ENCODE measurements at regions of chr14 and their contacts with region 1.

Region 1: DNA sequence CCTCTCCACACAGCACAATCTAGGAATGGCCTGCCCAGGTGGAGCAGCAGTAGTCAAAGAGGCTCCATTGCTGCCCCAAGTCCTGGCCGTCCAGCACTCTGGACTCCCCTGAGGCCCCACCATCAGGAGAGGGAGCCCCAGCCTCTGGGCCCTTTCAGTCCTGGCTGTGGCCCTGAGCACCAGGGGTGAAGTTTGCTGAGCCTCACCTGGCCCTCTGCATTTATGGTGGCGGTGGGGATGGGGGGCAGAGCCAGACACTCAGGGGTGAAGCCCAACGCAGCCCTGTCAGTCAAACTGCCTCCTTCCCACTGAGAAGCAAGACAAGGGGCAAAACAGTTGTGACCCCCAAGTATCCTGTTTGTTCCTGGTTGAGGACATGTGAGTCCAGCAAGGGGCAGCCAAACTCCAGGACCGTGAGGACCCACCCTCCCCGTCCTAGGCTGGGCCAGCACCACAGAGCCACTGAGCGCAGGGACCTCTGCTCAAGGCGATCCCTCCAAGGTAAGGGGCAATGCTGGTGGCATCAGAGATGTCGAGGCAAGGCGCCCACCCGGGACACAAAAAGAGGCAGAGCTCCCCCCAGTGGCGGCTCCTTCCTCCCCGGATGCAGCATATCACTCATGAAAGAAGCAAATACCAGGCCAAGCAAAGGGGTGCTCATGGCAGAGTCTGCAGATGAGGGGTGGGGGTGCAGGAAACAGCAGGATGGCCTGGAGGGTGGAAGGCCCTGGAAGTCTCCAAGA is 4.8 kb upstream of the AMN start:
- DNase-seq: no peak
- ATAC-seq: peak; percentile 68
- H3K4me3 ChIP-seq: no peak overlapping the region
- H3K27ac ChIP-seq: peak overlapping the region; percentile 17
- H3K4me1 ChIP-seq: peaks cover 22% of the 10 kb centered on the region
- H3K27me3 ChIP-seq: no peaks in the 10 kb centered on the region; a peak in 2 of 4 replicates
- CTCF ChIP-seq: peak; percentile 73 to 82 (median 75)
- EP300 ChIP-seq: no peak
- POLR2A ChIP-seq: peak; percentile 45
- RAD21 ChIP-seq: peak; percentile 84

Region 2: GRCh38 chr14:102524466-102525218 is 393.0 kb before region 1 on chr14:
- CTCF ChIA-PET with region 1: interaction called, 4 read pairs
- POLR2A ChIA-PET with region 1: no interaction called
- RAD21 ChIA-PET with region 1: no interaction called
- SMC1A ChIA-PET with region 1: no interaction called
- in situ Hi-C with region 1: no loop called
- intact Hi-C with region 1: loop called (anchors 10 kb)
- DNase-seq: peak; percentile 96
- ATAC-seq: peak; percentile 99
- H3K4me3 ChIP-seq: peak overlapping the region; percentile 84
- H3K27ac ChIP-seq: peak overlapping the region; percentile 43
- H3K4me1 ChIP-seq: no peaks in the 10 kb centered on the region; the same call in 1 of the 2 replicates
- H3K27me3 ChIP-seq: no peaks in the 10 kb centered on the region
- CTCF ChIP-seq: peak; percentile 96 to 97 (median 97)
- EP300 ChIP-seq: no peak
- POLR2A ChIP-seq: peak; percentile 83
- RAD21 ChIP-seq: peak; percentile 81

Region 3: GRCh38 chr14:102659797-102660196 is 257.8 kb before region 1 on chr14:
- CTCF ChIA-PET with region 1: no interaction called
- POLR2A ChIA-PET with region 1: no interaction called
- RAD21 ChIA-PET with region 1: no interaction called
- SMC1A ChIA-PET with region 1: no interaction called
- in situ Hi-C with region 1: no loop called
- intact Hi-C with region 1: no loop called
- DNase-seq: no peak
- ATAC-seq: no peak
- H3K4me3 ChIP-seq: no peak overlapping the region
- H3K27ac ChIP-seq: no peak overlapping the region
- H3K4me1 ChIP-seq: no peaks in the 10 kb centered on the region
- H3K27me3 ChIP-seq: no peaks in the 10 kb centered on the region
- CTCF ChIP-seq: no peak
- EP300 ChIP-seq: no peak
- POLR2A ChIP-seq: no peak
- RAD21 ChIP-seq: no peak

Region 4: DNA sequence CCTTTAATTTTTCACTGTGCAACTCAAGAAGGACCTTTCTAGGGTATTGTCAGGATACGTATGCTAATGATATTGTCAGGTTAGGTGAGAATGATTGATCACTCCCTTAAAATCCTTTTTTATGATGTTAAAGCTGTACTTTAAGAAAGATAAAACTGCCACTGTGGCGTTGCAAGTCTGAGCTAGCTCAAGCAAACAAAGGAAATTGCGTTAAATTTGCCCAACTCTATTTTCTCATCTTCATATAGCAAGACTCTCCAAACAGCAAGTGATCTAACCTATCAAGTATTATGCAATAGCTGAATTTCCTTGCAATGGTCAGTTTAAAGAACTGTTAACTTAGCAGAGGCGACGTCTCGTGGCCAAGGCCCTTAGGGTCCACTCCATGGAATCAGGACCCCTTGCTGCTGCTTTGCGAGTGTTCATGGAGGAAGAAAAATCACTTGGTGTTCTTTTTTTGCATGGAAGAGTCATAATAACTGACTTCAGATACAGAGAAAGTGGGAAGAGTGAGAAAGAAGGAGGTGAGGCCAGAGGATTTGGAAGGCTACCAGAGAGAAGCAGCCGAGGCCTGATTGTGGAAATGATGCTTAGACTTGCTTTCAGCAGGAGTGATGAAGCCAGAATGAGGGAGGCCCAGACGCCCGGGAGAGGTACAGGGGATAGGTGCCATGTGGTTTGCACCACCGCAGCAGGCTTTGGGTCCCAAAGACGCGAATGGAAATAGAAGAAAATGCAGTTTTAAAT is 137.9 kb before region 1 on chr14:
- CTCF ChIA-PET with region 1: interaction called, 10 read pairs
- POLR2A ChIA-PET with region 1: no interaction called
- RAD21 ChIA-PET with region 1: interaction called, 15 read pairs
- SMC1A ChIA-PET with region 1: interaction called, 5 read pairs
- in situ Hi-C with region 1: no loop called
- intact Hi-C with region 1: loop called (anchors 5 kb)
- DNase-seq: no peak
- ATAC-seq: no peak
- H3K4me3 ChIP-seq: peak overlapping the region; percentile 90
- H3K27ac ChIP-seq: peak overlapping the region; percentile 98
- H3K4me1 ChIP-seq: peaks cover 31% of the 10 kb centered on the region
- H3K27me3 ChIP-seq: no peaks in the 10 kb centered on the region
- CTCF ChIP-seq: peak in 1 of 3 experiments; percentile 24; a peak in 1 of 6 replicates
- EP300 ChIP-seq: no peak
- POLR2A ChIP-seq: no peak
- RAD21 ChIP-seq: peak; percentile 13; the same call in 1 of the 2 replicates

Region 5: GRCh38 chr14:102900631-102901571 is 16.7 kb before region 1 on chr14:
- CTCF ChIA-PET with region 1: interaction called, 12 read pairs
- POLR2A ChIA-PET with region 1: interaction called, 3 read pairs
- RAD21 ChIA-PET with region 1: interaction called, 5 read pairs
- SMC1A ChIA-PET with region 1: interaction called, 3 read pairs
- in situ Hi-C with region 1: no loop called
- intact Hi-C with region 1: no loop called
- DNase-seq: no peak
- ATAC-seq: peak; percentile 76
- H3K4me3 ChIP-seq: peak overlapping the region; percentile 43
- H3K27ac ChIP-seq: peak overlapping the region; percentile 98
- H3K4me1 ChIP-seq: peaks cover 59% of the 10 kb centered on the region
- H3K27me3 ChIP-seq: no peaks in the 10 kb centered on the region
- CTCF ChIP-seq: no peak
- EP300 ChIP-seq: no peak; a peak in 2 of 4 replicates
- POLR2A ChIP-seq: peak; percentile 61
- RAD21 ChIP-seq: no peak

Region 6: DNA sequence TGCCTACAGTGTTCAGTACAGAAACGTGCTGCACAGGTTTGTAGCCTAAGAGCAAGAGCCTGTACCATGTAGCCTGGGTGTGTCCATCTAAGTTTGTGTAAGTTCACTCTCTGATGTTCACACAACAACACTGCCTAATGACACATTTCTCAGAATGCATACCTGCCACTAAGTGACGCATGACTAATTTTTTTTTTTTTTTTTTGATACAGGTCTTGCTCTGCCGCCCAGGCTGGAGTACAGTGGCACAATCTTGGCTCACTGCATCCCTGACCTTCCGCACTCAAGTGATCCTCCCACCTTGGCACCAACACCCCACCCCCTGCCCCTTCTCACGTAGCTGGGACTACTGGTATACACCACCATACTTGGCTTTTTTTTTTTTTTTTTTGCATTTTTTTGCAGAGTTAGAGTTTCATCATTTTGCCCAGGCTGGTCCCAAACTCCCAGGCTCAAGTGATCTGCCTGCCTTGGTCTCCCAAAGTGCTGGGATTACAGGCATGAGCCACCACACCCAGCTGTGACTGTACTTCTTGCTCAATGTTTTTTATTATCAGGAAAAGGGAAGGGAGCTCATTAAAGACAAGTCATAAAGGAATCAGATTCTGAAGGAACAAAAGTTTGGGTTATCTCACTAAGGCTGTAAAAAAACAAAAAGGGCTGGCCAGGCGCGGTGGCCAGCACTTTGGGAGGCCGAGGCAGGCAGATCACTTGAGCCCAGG is 149.8 kb after region 1 on chr14:
- CTCF ChIA-PET with region 1: no interaction called
- POLR2A ChIA-PET with region 1: no interaction called
- RAD21 ChIA-PET with region 1: no interaction called
- SMC1A ChIA-PET with region 1: no interaction called
- in situ Hi-C with region 1: no loop called
- intact Hi-C with region 1: no loop called
- DNase-seq: no peak
- ATAC-seq: no peak
- H3K4me3 ChIP-seq: no peak overlapping the region
- H3K27ac ChIP-seq: no peak overlapping the region
- H3K4me1 ChIP-seq: no peaks in the 10 kb centered on the region
- H3K27me3 ChIP-seq: no peaks in the 10 kb centered on the region; a peak in 1 of 4 replicates
- CTCF ChIP-seq: no peak
- EP300 ChIP-seq: no peak
- POLR2A ChIP-seq: no peak
- RAD21 ChIP-seq: no peak